ENCODE measurements at regions of chr7 and their contacts with region 1.

Region 1: DNA sequence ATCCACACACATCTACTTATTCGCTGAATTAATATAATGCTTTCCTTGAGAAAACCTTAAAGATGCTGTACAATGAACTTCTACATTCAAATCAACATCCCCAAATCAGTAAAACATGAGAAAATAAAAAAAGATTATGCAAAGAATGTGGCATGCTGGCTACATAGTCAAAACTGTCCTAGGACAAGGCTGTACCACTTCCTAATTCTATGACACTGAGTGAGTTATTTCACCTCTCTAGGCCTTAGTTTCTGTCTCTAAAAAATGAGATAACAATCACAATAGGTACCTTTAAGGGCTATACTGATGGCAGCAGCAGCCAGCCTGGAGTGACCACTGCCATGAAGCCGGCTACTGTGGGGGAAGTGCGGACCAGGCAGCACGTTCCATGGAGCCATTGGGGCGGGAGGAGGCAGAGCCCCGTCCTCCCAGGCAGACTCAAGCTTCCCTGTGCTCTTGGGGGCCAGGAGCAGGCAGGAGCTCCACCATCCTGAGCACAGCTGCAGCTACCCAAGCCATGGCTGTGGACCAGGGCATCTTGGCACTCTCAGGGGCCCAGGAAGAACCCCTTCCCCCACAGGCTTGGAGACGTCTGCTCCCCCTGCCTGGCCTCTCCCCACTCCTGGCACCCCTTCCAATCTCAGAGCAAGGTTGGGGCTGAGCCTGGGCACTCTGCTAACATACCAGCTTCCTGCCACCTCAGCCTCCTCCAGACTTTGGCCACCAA is 110.2 kb downstream of the ELAPOR2 start:
- DNase-seq: peak; percentile 26
- ATAC-seq: peak in 1 of 2 donors; percentile 30
- H3K4me3 ChIP-seq: no peak overlapping the region
- H3K27ac ChIP-seq: no peak overlapping the region
- H3K4me1 ChIP-seq: peaks cover 16% of the 10 kb centered on the region
- H3K27me3 ChIP-seq: no peaks in the 10 kb centered on the region
- CTCF ChIP-seq: no peak

Region 2: GRCh38 chr7:87231256-87231655 is 282.0 kb after region 1 on chr7:
- intact Hi-C with region 1: loop called (anchors 10 kb)
- DNase-seq: no peak
- ATAC-seq: peak in 1 of 2 donors; percentile 64
- H3K4me3 ChIP-seq: no peak overlapping the region
- H3K27ac ChIP-seq: no peak overlapping the region
- H3K4me1 ChIP-seq: no peaks in the 10 kb centered on the region
- H3K27me3 ChIP-seq: no peaks in the 10 kb centered on the region
- CTCF ChIP-seq: no peak

Measured in lower lobe of right lung (tissue), 2 donors.